ENCODE measurements at regions of chr6 and their contacts with region 1.

Region 1: GRCh38 chr6:12011276-12012076 is 636 bp upstream of the HIVEP1 start:
- DNase-seq: peak; percentile 99
- ATAC-seq: peak; percentile 77
- H3K4me3 Mint-ChIP-seq: peak overlapping the region; percentile 96
- H3K27ac Mint-ChIP-seq: peak overlapping the region; percentile 98
- H3K4me1 Mint-ChIP-seq: peaks cover 39% of the 10 kb centered on the region
- H3K27me3 Mint-ChIP-seq: no peaks in the 10 kb centered on the region

Region 2: GRCh38 chr6:10411971-10412745 is 1599.3 kb before region 1 on chr6:
- CTCF ChIA-PET with region 1: no interaction called
- POLR2A ChIA-PET with region 1: no interaction called
- intact Hi-C with region 1: loop called in 1 of 2 experiments (anchors 10 kb)
- DNase-seq: peak; percentile 63
- ATAC-seq: peak; percentile 78
- H3K4me3 Mint-ChIP-seq: peak overlapping the region; percentile 80
- H3K27ac Mint-ChIP-seq: peak overlapping the region; percentile 85
- H3K4me1 Mint-ChIP-seq: peaks cover 39% of the 10 kb centered on the region
- H3K27me3 Mint-ChIP-seq: peaks cover 85% of the 10 kb centered on the region

Region 3: DNA sequence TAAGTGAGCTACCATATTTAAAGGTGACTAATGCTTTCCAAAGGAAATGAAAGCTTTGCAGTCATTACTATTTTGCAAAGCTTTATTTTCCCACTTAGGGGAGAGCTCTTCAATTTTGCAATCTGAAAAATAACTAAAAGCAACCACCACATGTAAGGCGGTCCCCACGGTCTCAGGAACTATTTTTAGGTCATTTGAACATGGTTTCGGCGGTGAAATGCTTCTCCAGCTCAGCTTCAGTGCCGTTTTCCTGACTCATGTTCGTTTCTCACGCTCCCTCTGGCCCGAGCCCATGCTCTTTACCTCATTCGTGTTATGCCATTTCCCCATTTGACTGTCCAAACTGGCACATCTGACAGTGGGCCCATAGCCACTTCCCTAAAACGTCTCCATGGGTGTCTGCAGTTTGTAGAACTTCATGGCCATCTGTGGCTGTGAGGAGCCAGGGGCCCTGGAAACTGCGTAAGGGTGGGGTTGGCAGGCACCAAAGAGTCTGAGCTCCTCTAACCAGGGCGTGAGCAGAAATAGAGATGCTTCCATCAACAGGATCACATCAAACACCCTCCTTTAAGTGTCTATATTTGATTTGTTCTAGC is 279.3 kb before region 1 on chr6:
- CTCF ChIA-PET with region 1: no interaction called
- POLR2A ChIA-PET with region 1: interaction called, 16 read pairs
- intact Hi-C with region 1: loop called (anchors 1 to 5 kb)
- DNase-seq: peak; percentile 84
- ATAC-seq: peak; percentile 58
- H3K4me3 Mint-ChIP-seq: peak overlapping the region; percentile 22
- H3K27ac Mint-ChIP-seq: peak overlapping the region; percentile 90
- H3K4me1 Mint-ChIP-seq: peaks cover 62% of the 10 kb centered on the region
- H3K27me3 Mint-ChIP-seq: peaks cover 2% of the 10 kb centered on the region

Region 4: DNA sequence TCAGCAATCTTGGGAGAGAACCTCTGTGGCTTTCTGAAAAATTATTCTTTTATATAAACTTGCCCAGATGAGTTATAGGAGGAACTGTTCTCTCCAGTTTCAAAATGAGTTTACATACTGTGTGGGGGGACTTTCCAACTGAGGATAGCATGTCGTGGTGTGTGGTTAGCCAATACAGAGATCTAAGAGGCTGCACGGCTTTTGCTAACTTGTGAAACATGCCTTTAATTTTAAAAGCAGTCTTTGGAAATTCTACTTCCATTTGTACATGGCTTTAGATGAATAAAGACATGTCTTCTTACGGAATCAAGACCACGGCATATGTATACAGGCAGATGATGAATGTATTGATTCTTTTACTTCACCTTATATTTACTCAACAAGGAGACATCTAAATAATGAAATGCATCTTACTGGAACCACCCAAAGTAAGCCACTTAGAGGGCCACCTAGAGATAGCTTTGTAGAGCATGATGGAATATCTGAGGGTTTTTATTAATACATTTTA is 40.4 kb after region 1 on chr6:
- CTCF ChIA-PET with region 1: no interaction called
- POLR2A ChIA-PET with region 1: no interaction called
- intact Hi-C with region 1: loop called (anchors 1 to 2 kb)
- DNase-seq: peak; percentile 80
- ATAC-seq: peak; percentile 91
- H3K4me3 Mint-ChIP-seq: peak overlapping the region; percentile 53
- H3K27ac Mint-ChIP-seq: peak overlapping the region; percentile 94
- H3K4me1 Mint-ChIP-seq: peaks cover 76% of the 10 kb centered on the region
- H3K27me3 Mint-ChIP-seq: no peaks in the 10 kb centered on the region

Region 5: DNA sequence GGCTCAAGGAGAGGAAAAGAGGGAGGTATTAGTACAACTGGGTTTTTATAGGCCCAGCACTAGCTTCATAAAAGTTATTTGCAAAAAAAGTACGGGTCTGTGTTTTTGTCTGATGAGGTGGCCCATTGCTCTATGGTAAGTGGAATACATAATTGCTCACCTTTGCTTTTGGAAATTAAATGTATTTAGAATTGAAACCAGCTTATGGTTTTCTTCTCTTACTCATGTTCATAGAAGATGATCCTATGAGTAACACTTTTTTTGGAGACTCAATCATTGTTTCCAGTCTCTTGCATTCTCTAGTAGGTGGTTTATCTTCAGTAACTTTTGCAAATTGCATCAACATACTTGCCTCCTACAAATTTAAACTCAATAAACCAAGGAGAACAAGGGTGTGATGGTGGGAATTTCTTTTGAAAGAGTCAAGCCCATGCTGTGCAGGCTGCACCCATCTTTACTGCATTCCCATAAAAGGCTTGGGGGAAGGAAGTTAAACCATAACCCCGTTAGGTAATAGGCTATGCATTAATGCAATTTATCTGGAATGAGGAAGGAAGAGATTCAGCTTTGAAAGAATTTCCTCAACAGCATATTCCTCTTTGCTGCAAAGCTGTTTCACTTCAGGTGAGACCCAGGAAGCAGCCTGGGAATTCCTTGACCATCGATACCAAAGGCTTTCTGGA is 230.2 kb after region 1 on chr6:
- CTCF ChIA-PET with region 1: no interaction called
- POLR2A ChIA-PET with region 1: no interaction called
- intact Hi-C with region 1: loop called in 1 of 2 experiments (anchors 2 kb)
- DNase-seq: no peak
- ATAC-seq: peak; percentile 91
- H3K4me3 Mint-ChIP-seq: no peak overlapping the region
- H3K27ac Mint-ChIP-seq: peak overlapping the region; percentile 61
- H3K4me1 Mint-ChIP-seq: peaks cover 24% of the 10 kb centered on the region
- H3K27me3 Mint-ChIP-seq: peaks cover 4% of the 10 kb centered on the region